Breast epithelium (tissue), 4 donors: ENCODE measurements at regions of chr1 and their contacts with region 1.

Region 1: DNA sequence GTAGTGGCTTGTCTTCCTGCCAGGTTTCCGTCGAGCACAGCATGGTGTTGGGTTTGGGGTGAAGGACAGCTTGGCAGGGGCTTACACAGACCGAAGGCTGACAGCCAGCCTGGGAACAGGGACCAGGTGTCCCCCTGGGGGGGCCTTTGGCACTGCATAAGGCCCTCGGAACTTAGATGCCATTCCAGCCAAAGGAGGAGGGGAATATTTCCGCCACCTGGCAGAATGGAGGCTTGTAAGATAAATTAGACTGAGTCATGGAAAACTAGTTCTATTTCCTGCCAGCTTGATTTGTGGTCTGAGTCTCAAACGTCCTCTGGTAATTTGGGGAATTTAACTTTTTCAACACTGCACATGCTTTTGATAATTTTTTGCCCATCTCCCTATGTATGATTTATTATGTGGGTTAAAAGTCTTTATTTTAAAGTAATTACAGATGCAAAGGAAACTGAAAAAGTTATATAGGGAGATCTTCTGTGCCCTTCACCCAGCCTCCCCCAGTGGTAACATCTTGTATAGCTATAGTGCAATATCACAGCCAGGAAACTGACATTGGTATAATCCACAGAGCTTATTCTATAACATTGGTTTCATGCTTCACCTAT is 11.5 kb upstream of the TMEM51 start:
- DNase-seq: no peak
- H3K4me3 ChIP-seq: no peak overlapping the region
- H3K27ac ChIP-seq: peak overlapping the region in 1 of 2 donors; percentile 11
- H3K4me1 ChIP-seq: no peaks in the 10 kb centered on the region
- H3K27me3 ChIP-seq: no peaks in the 10 kb centered on the region
- CTCF ChIP-seq: no peak
- POLR2A ChIP-seq: no peak

Region 2: GRCh38 chr1:15188130-15188524 is 46.1 kb after region 1 on chr1:
- intact Hi-C with region 1: no loop called
- DNase-seq: no peak
- H3K4me3 ChIP-seq: no peak overlapping the region
- H3K27ac ChIP-seq: peak overlapping the region in 1 of 2 donors; percentile 33
- H3K4me1 ChIP-seq: no peaks in the 10 kb centered on the region
- H3K27me3 ChIP-seq: no peaks in the 10 kb centered on the region
- CTCF ChIP-seq: no peak
- POLR2A ChIP-seq: no peak

Region 3: DNA sequence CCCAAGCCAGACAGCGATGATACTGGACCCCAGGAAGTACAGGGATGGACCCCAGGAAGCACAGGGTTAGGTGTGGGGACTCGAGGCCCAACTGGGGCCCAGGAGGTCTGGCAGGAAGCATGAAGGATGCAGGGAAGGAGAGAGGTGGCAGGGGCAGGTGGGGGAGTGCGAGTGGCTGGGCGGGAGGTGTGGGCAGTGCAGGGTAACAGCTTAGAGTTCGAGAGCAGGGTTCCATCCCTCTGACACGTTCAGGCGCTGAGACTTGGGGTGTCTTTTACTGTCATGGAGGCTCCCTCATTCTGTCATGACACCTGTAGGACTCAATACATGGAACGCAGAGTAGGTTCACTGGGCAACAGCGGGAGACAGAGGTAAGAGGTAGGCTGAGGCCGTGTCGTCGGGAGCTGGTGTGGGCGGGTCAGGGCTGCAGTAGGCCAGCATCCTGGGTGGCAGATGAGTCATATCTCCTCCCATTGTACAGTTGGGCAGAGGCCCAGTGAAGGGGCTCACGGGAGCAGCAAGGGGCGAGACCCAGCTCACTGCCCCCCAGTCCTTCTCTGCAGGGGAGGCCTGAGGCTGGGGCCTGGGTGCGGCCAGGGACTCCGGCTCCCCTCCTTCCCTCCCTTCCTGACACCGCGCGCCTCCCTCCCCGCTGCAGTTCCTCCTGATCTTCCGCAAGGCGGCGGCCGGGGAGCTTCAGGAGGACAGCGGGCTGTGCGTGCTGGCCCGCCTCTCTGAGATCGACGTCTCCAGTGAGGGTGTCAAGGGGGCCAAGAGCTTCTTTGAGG is 284.6 kb after region 1 on chr1:
- intact Hi-C with region 1: loop called (anchors 10 kb)
- DNase-seq: no peak
- H3K4me3 ChIP-seq: no peak overlapping the region
- H3K27ac ChIP-seq: no peak overlapping the region
- H3K4me1 ChIP-seq: no peaks in the 10 kb centered on the region
- H3K27me3 ChIP-seq: no peaks in the 10 kb centered on the region
- CTCF ChIP-seq: peak in 2 of 3 donors; percentile 24 to 29
- POLR2A ChIP-seq: no peak

Region 4: DNA sequence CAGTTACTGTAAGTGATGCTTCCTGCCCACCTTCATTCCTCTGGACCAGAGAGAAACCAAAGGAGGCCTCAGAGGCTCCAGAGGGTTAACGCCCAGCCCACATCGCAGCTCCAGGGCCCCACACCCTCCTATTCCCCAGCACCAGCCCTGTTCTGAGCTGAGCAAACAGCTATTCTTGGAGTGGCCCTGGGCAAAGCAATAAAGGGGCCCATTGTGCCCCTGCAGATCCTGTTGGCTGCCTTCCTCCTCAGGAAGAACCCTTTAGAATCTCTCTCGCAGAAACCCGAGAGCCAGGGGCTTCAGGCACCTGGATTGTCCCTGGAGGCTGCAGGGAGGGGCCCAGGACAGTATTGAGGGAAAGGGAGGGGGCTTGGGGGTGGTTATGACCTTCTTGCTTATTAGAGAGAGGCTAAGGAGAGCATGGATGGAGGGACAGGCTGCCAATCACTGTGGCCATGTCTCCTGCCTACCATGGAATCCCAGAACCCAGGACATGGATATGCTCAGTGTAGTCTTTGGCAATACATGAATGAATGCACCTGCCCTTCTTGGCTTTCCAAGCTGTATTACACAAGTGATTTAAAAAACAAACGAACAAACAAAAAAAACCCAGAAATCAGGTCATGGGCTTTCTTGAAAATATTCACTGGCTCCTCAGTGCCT is 1968.0 kb after region 1 on chr1:
- intact Hi-C with region 1: loop called (anchors 10 kb)
- DNase-seq: no peak
- H3K4me3 ChIP-seq: no peak overlapping the region
- H3K27ac ChIP-seq: peak overlapping the region; percentile 40 to 65
- H3K4me1 ChIP-seq: no peaks in the 10 kb centered on the region
- H3K27me3 ChIP-seq: no peaks in the 10 kb centered on the region
- CTCF ChIP-seq: no peak
- POLR2A ChIP-seq: no peak